ENCODE measurements at regions of chr14 and their contacts with region 1.

Region 1: GRCh38 chr14:55665067-55665675 is 85.2 kb downstream of the KTN1 start:
- DNase-seq: no peak
- H3K4me3 ChIP-seq: no peak overlapping the region
- H3K27ac ChIP-seq: no peak overlapping the region
- H3K27me3 ChIP-seq: no peaks in the 10 kb centered on the region
- CTCF ChIP-seq: no peak

Region 2: GRCh38 chr14:55488204-55488603 is 177.0 kb before region 1 on chr14:
- CTCF ChIA-PET with region 1: no interaction called
- POLR2A ChIA-PET with region 1: interaction called, 12 read pairs
- DNase-seq: no peak
- H3K4me3 ChIP-seq: no peak overlapping the region
- H3K27ac ChIP-seq: no peak overlapping the region
- H3K27me3 ChIP-seq: no peaks in the 10 kb centered on the region
- CTCF ChIP-seq: no peak